Natural killer cell (primary cell): ENCODE measurements at regions of chr1 and their contacts with region 1.

Region 1: DNA sequence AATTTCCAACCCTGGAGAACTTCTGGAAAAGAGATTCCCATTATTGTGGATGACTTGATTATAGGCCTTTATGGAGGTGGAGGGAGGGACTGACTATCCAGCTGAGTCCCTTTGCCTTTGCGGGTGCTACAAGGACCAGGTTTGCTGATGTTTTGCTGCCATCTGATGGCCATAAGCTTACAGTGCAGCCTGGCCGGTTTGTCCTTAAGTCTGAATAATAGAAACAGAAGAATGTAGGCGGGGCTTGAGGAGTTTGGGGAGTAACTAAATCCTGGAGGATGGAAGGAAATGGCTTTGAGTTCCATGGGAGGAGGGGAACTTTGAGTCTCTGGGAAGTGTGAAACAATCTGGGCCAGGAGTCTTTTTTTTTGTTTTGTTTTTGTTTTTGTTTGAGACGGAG is 55.7 kb upstream of the CD1D start:
- DNase-seq: peak; percentile 57 to 86
- ATAC-seq: peak; percentile 88 to 98 (median 97)
- H3K4me3 ChIP-seq: no peak overlapping the region
- H3K4me3 Mint-ChIP-seq: no peak overlapping the region
- H3K27ac ChIP-seq: no peak overlapping the region
- H3K27ac Mint-ChIP-seq: no peak overlapping the region
- H3K4me1 ChIP-seq: peaks cover 4% of the 10 kb centered on the region
- H3K4me1 Mint-ChIP-seq: peaks cover 5 to 6% of the 10 kb centered on the region in 2 donors
- H3K27me3 ChIP-seq: peaks cover under 1% of the 10 kb centered on the region
- H3K27me3 Mint-ChIP-seq: peaks cover 36 to 56% of the 10 kb centered on the region in 2 donors
- CTCF ChIP-seq: peak; percentile 85

Region 2: DNA sequence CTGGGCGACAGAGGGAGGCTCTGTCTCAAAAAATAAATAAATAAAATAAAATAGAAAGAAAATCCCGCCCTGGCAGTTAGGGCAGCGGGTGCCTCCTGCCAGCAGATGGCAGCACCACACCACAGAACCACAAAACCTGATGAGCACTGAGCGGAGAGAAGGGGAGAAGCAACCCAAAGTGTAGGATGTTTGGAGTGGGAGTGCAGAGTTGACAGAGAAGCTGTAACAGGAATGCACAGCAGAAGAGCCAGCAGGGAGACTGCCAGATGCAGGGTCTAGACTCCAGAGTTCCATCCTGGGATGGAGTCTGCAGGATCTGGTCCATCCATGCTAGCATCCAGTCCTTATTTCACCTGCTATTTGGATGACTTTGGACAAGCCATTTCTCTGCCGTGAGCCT is 161.3 kb before region 1 on chr1:
- intact Hi-C with region 1: loop called (anchors 1 kb)
- DNase-seq: peak; percentile 41 to 69
- ATAC-seq: peak; percentile 50 to 76 (median 54)
- H3K4me3 ChIP-seq: no peak overlapping the region
- H3K4me3 Mint-ChIP-seq: no peak overlapping the region
- H3K27ac ChIP-seq: no peak overlapping the region
- H3K27ac Mint-ChIP-seq: no peak overlapping the region
- H3K4me1 ChIP-seq: no peaks in the 10 kb centered on the region
- H3K4me1 Mint-ChIP-seq: no peaks in the 10 kb centered on the region
- H3K27me3 ChIP-seq: no peaks in the 10 kb centered on the region
- H3K27me3 Mint-ChIP-seq: peaks cover 9 to 38% of the 10 kb centered on the region in 2 donors
- CTCF ChIP-seq: peak; percentile 83

Region 3: DNA sequence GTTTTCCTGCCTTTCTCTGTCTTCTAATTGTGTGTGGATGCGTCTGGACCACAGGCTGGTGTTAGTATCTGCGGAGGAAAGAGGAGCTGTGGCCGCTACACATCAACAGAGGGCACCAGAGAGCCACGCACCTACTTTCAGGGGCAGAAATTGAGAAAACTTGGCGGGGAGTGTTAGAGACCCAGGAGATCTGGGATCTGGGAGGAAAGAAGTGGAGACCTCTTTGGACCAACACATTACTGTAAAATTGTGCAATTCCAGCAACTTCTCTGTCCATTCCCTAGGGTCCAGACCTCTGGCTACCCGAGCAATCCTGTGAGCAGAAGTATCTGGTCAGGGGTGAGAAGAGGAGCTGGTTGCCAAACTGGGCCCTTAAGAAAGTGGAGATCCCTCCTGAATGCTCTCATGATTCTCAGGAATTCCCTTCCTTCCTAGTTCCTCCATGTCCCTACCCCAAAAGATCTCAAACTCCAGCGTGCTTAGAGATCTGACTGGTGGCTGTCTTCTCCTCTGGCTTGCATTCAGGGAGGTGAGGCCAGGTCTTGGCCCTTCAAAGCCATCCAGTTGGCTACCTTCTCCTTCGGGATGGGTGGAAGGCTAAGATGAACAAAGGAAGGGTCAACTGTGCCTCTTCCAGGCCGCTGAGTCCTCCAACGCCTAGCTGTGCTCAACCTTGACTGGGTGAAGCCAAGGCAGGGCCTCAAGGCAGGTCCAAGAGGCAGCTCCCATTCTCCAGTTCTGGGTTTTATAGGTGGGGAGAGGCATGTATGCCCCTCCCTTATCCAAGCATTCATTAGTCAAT is 132.8 kb before region 1 on chr1:
- intact Hi-C with region 1: loop called (anchors 2 kb)
- DNase-seq: peak; percentile 21 to 64
- ATAC-seq: peak; percentile 54 to 75 (median 63)
- H3K4me3 ChIP-seq: no peak overlapping the region
- H3K4me3 Mint-ChIP-seq: peak overlapping the region; percentile 83
- H3K27ac ChIP-seq: no peak overlapping the region
- H3K27ac Mint-ChIP-seq: no peak overlapping the region
- H3K4me1 ChIP-seq: peaks cover 12% of the 10 kb centered on the region
- H3K4me1 Mint-ChIP-seq: peaks cover 0 to 10% of the 10 kb centered on the region in 2 donors
- H3K27me3 ChIP-seq: peaks cover 27% of the 10 kb centered on the region
- H3K27me3 Mint-ChIP-seq: peaks cover 34 to 42% of the 10 kb centered on the region in 2 donors
- CTCF ChIP-seq: peak; percentile 78

Region 4: GRCh38 chr1:158716335-158716734 is 591.3 kb after region 1 on chr1:
- intact Hi-C with region 1: no loop called
- DNase-seq: no peak
- ATAC-seq: no peak
- H3K4me3 ChIP-seq: no peak overlapping the region
- H3K4me3 Mint-ChIP-seq: no peak overlapping the region
- H3K27ac ChIP-seq: no peak overlapping the region
- H3K27ac Mint-ChIP-seq: no peak overlapping the region
- H3K4me1 ChIP-seq: no peaks in the 10 kb centered on the region
- H3K4me1 Mint-ChIP-seq: no peaks in the 10 kb centered on the region
- H3K27me3 ChIP-seq: peaks cover 12% of the 10 kb centered on the region
- H3K27me3 Mint-ChIP-seq: peaks cover 33 to 74% of the 10 kb centered on the region in 2 donors
- CTCF ChIP-seq: no peak